ENCODE measurements at regions of chr5 and their contacts with region 1.

Region 1: GRCh38 chr5:149442563-149443182 is 63.6 kb upstream of the IL17B start:
- DNase-seq: peak; percentile 46 to 91
- H3K4me3 ChIP-seq: no peak overlapping the region
- H3K27ac ChIP-seq: no peak overlapping the region
- H3K4me1 ChIP-seq: peaks cover 42% of the 10 kb centered on the region
- H3K27me3 ChIP-seq: no peaks in the 10 kb centered on the region
- CTCF ChIP-seq: peak; percentile 89

Region 2: GRCh38 chr5:147734894-147735293 is 1707.8 kb before region 1 on chr5:
- CTCF ChIA-PET with region 1: no interaction called
- POLR2A ChIA-PET with region 1: interaction called, 10 read pairs
- intact Hi-C with region 1: no loop called
- DNase-seq: no peak
- H3K4me3 ChIP-seq: no peak overlapping the region
- H3K27ac ChIP-seq: no peak overlapping the region
- H3K4me1 ChIP-seq: no peaks in the 10 kb centered on the region
- H3K27me3 ChIP-seq: no peaks in the 10 kb centered on the region
- CTCF ChIP-seq: no peak

Region 3: GRCh38 chr5:148511810-148512347 is 930.8 kb before region 1 on chr5:
- CTCF ChIA-PET with region 1: no interaction called
- POLR2A ChIA-PET with region 1: no interaction called
- intact Hi-C with region 1: no loop called
- DNase-seq: no peak
- H3K4me3 ChIP-seq: no peak overlapping the region
- H3K27ac ChIP-seq: no peak overlapping the region
- H3K4me1 ChIP-seq: no peaks in the 10 kb centered on the region
- H3K27me3 ChIP-seq: no peaks in the 10 kb centered on the region
- CTCF ChIP-seq: no peak

Region 4: DNA sequence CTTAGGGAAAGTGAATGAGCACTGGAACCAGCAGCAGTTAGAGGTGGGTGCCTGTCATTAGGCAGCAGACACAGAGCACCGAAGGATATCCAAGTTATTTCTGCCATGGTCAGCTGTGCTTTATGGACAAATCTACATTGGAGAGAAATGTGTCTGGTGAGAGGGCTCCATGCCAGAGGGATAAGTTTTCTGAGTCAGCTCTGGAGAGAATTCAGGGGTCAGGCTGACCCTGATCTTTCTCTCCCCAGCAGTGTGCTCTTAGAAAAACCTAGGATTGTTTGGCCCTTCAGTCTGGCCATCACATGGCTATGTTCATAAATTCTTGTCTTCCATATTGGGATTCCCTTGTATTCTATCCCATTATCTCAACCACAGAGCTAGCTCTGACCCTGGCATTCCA is 54.7 kb before region 1 on chr5:
- CTCF ChIA-PET with region 1: interaction called, 16 read pairs
- POLR2A ChIA-PET with region 1: no interaction called
- intact Hi-C with region 1: no loop called
- DNase-seq: no peak
- H3K4me3 ChIP-seq: no peak overlapping the region
- H3K27ac ChIP-seq: no peak overlapping the region
- H3K4me1 ChIP-seq: no peaks in the 10 kb centered on the region
- H3K27me3 ChIP-seq: no peaks in the 10 kb centered on the region
- CTCF ChIP-seq: no peak

Region 5: DNA sequence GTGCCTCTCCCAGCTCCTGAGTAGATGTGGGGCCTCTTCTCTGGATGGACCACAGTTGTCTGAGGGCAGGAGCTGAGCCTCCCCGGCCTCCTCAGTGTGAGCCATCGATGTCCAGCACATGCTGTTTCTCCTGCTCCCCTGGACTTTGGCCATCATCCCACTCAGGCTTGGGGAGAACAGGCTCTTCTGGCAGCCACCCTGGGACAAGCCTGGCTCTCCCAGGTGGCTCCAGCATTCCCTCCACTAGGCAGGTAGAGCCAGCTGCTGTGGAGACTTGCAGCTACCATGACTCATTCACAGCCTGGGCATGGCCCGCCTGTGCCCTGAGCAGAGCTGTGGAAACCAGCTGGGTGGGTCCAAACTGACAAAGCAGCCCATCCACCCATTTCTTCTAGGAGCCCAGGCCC is 31.5 kb after region 1 on chr5:
- CTCF ChIA-PET with region 1: interaction called, 10 read pairs
- POLR2A ChIA-PET with region 1: interaction called, 9 read pairs
- intact Hi-C with region 1: no loop called
- DNase-seq: peak; percentile 82 to 84
- H3K4me3 ChIP-seq: no peak overlapping the region
- H3K27ac ChIP-seq: no peak overlapping the region
- H3K4me1 ChIP-seq: peaks cover 22% of the 10 kb centered on the region
- H3K27me3 ChIP-seq: no peaks in the 10 kb centered on the region
- CTCF ChIP-seq: no peak

Region 6: DNA sequence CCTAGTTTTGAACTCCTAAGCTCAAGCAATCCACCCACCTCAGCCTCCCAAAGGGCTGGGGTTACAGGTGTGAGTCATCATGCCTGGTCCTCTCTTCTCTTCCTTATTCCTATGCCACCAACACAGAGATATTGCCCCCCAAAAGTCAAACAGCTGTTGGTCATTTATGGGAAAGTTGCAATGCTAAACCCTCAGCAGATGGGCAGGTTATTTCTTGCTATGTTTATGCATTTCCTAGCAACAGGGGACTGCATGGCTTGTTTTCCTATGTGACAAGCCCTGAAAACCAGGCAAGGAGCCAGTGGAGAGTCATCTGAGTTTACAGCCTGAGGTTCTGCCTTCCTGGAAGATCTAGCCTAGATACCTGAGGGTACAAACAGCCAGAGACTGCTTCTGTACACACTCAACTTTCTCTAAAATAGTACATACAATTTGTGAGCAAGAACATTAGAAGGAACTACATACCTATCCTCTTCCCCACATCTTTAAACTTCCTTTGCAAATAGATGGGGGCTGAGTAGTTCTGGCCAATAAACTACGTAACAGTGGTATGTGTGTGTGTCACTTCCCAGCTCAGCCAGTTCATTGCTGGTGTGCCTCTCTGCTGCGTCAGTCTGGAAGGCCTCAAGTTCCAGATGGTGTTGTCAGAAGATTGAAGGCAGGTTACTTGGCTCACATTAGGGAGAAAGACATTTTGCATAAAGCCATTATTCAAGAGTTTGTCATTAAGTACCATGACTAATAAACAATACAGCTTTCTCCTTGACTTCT is 43.2 kb after region 1 on chr5:
- CTCF ChIA-PET with region 1: no interaction called
- POLR2A ChIA-PET with region 1: interaction called, 19 read pairs
- intact Hi-C with region 1: loop called (anchors 1 kb)
- DNase-seq: peak; percentile 89 to 99
- H3K4me3 ChIP-seq: no peak overlapping the region
- H3K27ac ChIP-seq: peak overlapping the region; percentile 92
- H3K4me1 ChIP-seq: peaks cover 88% of the 10 kb centered on the region
- H3K27me3 ChIP-seq: no peaks in the 10 kb centered on the region
- CTCF ChIP-seq: no peak

Region 7: DNA sequence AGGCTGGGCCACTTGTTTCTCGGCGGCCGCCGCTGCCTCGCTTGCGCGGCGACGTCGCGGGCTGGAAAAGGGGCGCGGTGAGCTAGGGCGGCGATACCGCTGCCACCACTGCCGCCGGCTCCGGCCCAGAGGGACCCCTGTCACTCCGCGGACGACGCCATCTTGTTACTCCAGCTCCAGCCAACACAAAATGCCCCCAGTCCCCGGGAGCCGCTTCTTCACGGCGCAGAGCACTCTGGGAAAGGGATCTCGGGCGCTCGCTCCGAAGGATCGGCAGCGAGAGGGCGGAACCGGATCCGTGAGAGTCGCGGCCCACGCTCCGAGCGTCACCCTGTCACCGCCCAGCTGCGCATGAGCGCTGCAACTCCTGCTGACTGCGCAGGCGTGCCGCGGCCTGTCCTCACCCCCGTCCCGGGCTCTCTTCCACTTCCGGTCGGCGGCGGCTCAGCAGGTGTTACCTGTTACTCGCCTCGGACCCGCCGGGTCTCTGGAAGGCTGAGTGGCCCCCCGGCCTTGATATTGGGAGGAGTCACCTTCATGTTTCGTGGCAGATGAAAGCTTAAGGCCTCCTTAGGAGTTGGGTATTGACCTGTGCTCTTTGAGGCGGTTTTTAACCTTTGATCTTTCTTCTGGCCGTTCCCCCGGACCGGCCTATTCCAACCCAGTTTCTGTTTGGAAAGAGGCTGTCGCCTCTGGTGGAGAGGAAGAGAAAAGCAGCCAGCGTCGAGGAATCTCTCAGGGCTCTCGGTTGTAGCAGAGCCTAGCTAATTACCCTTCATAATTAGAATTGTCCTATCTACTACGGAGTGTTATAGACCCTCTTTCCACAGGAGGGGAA is 108.7 kb after region 1 on chr5 and contains the start of gene CSNK1A1:
- CTCF ChIA-PET with region 1: interaction called, 6 read pairs
- POLR2A ChIA-PET with region 1: interaction called, 8 read pairs
- intact Hi-C with region 1: loop called (anchors 1 kb)
- DNase-seq: peak; percentile 93 to 99
- H3K4me3 ChIP-seq: peak within 1 kb of the TSS; percentile 82
- H3K27ac ChIP-seq: peak within 1 kb of the TSS; percentile 86
- H3K4me1 ChIP-seq: peaks cover 57% of the 10 kb centered on the region
- H3K27me3 ChIP-seq: no peaks in the 10 kb centered on the region
- CTCF ChIP-seq: peak; percentile 88
- total RNA-seq, gene CSNK1A1: 300 and 334 TPM in 2 replicates

Region 8: DNA sequence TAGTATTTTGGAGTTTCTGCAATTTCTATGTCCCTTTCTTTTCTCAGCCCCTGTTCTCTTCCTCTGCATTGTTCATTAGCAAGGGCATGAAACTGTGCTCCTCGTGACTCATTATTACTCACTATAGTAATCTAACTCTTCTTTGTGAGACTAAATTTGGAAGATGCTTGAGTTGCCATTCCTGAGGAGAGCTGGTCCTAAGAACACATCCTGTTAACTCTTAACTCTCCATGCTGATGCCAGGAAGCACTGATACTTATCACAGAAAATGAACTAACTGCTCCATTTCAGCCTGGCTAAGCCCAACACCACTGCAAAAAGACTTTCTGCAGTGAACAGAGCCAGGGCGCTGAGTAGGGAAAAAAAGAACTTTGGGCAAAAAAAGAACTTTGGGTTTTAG is 119.2 kb after region 1 on chr5:
- CTCF ChIA-PET with region 1: interaction called, 8 read pairs
- POLR2A ChIA-PET with region 1: no interaction called
- intact Hi-C with region 1: loop called (anchors 1 kb)
- DNase-seq: peak; percentile 48 to 95
- H3K4me3 ChIP-seq: peak overlapping the region; percentile 43; the same call in 1 of the 2 replicates
- H3K27ac ChIP-seq: peak overlapping the region; percentile 97
- H3K4me1 ChIP-seq: peaks cover 53% of the 10 kb centered on the region
- H3K27me3 ChIP-seq: no peaks in the 10 kb centered on the region
- CTCF ChIP-seq: no peak

Measured in PC-9 (cell line).